Activated CD4-positive, alpha-beta memory T cell treated with anti-CD3 and anti-CD28 coated beads for 36 hours (primary cell): ENCODE measurements at regions of chr9 and their contacts with region 1.

Region 1: GRCh38 chr9:111916234-111916645 is 19.6 kb downstream of the UGCG start:
- DNase-seq: peak; percentile 53
- H3K4me3 Mint-ChIP-seq: peak overlapping the region; percentile 8
- H3K27ac Mint-ChIP-seq: peak overlapping the region; percentile 77
- H3K4me1 Mint-ChIP-seq: peaks cover 54% of the 10 kb centered on the region
- H3K27me3 Mint-ChIP-seq: no peaks in the 10 kb centered on the region

Region 2: DNA sequence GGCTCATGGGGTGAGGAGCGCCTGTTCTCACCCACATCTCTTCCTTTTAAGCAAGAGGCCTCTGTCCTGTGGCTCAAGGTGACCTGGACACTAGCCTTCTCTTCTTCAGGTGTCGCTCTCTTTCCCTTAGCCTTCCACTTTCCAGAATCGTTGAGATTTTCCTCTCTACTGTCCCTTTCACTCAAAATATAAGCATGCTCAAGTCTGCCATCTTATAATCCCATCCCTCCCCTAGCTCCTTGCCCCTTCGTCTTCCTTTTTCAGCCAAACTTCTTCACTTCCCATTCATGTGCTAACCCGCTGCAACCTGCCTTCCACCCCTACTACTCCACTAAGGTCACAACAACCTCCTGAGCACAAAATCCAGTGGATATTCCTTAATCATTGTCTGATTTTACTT is 329.9 kb before region 1 on chr9:
- CTCF ChIA-PET with region 1: no interaction called
- POLR2A ChIA-PET with region 1: no interaction called
- intact Hi-C with region 1: no loop called
- DNase-seq: no peak
- H3K4me3 Mint-ChIP-seq: no peak overlapping the region
- H3K27ac Mint-ChIP-seq: no peak overlapping the region
- H3K4me1 Mint-ChIP-seq: no peaks in the 10 kb centered on the region
- H3K27me3 Mint-ChIP-seq: no peaks in the 10 kb centered on the region

Region 3: GRCh38 chr9:111597817-111598729 is 318.2 kb before region 1 on chr9:
- CTCF ChIA-PET with region 1: no interaction called
- POLR2A ChIA-PET with region 1: no interaction called
- intact Hi-C with region 1: no loop called
- DNase-seq: peak; percentile 76
- H3K4me3 Mint-ChIP-seq: peak overlapping the region; percentile 83
- H3K27ac Mint-ChIP-seq: no peak overlapping the region
- H3K4me1 Mint-ChIP-seq: peaks cover 14% of the 10 kb centered on the region
- H3K27me3 Mint-ChIP-seq: peaks cover 28% of the 10 kb centered on the region

Region 4: GRCh38 chr9:111805830-111806241 is 110.4 kb before region 1 on chr9:
- CTCF ChIA-PET with region 1: no interaction called
- POLR2A ChIA-PET with region 1: no interaction called
- intact Hi-C with region 1: loop called (anchors 5 kb)
- DNase-seq: no peak
- H3K4me3 Mint-ChIP-seq: no peak overlapping the region
- H3K27ac Mint-ChIP-seq: no peak overlapping the region
- H3K4me1 Mint-ChIP-seq: peaks cover 30% of the 10 kb centered on the region
- H3K27me3 Mint-ChIP-seq: no peaks in the 10 kb centered on the region

Region 5: DNA sequence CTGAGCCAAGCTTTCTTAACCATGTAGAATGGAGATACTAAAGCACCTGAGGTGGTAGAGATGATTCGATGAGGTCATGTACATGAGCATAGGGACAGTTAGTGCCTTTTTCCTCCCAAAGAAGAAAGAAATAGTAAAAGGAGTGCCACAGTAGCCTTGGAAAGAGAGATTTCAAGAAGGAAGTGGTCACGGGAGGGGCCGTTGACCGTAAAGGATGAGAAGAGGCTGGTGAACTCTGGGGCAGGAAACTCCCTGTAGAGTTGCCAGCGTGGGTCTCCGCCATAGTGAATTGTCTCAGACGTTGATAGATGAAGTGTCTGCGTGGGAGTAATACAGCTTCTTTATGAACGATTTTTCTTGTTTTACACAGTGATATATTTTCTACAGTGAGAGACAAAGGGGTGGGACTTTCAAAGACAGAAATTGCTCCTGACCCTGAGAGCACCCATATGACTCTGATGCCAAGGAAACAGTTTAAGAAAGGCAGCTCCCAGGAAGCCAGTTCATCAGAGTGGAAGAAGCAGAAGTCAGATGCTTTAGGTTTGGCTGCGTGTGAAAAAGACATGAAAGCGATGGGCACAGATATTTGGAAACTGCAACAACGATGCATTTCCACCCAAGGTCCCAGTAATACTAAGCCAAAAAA is 21.7 kb after region 1 on chr9:
- CTCF ChIA-PET with region 1: interaction called, 5 read pairs
- POLR2A ChIA-PET with region 1: interaction called, 10 read pairs
- intact Hi-C with region 1: loop called (anchors 1 kb)
- DNase-seq: peak; percentile 88
- H3K4me3 Mint-ChIP-seq: peak overlapping the region; percentile 53
- H3K27ac Mint-ChIP-seq: peak overlapping the region; percentile 83
- H3K4me1 Mint-ChIP-seq: peaks cover 23% of the 10 kb centered on the region
- H3K27me3 Mint-ChIP-seq: no peaks in the 10 kb centered on the region

Region 6: GRCh38 chr9:111992523-111992922 is 76.3 kb after region 1 on chr9:
- CTCF ChIA-PET with region 1: interaction called, 3 read pairs
- POLR2A ChIA-PET with region 1: no interaction called
- intact Hi-C with region 1: loop called (anchors 1 kb)
- DNase-seq: peak; percentile 45
- H3K4me3 Mint-ChIP-seq: no peak overlapping the region
- H3K27ac Mint-ChIP-seq: peak overlapping the region; percentile 18
- H3K4me1 Mint-ChIP-seq: peaks cover 34% of the 10 kb centered on the region
- H3K27me3 Mint-ChIP-seq: peaks cover 2% of the 10 kb centered on the region

Region 7: GRCh38 chr9:112037281-112038016 is 121.2 kb after region 1 on chr9:
- CTCF ChIA-PET with region 1: interaction called, 4 read pairs
- POLR2A ChIA-PET with region 1: no interaction called
- intact Hi-C with region 1: loop called (anchors 1 kb)
- DNase-seq: peak; percentile 86
- H3K4me3 Mint-ChIP-seq: peak overlapping the region; percentile 37
- H3K27ac Mint-ChIP-seq: peak overlapping the region; percentile 81
- H3K4me1 Mint-ChIP-seq: peaks cover 49% of the 10 kb centered on the region
- H3K27me3 Mint-ChIP-seq: peaks cover 18% of the 10 kb centered on the region

Region 8: DNA sequence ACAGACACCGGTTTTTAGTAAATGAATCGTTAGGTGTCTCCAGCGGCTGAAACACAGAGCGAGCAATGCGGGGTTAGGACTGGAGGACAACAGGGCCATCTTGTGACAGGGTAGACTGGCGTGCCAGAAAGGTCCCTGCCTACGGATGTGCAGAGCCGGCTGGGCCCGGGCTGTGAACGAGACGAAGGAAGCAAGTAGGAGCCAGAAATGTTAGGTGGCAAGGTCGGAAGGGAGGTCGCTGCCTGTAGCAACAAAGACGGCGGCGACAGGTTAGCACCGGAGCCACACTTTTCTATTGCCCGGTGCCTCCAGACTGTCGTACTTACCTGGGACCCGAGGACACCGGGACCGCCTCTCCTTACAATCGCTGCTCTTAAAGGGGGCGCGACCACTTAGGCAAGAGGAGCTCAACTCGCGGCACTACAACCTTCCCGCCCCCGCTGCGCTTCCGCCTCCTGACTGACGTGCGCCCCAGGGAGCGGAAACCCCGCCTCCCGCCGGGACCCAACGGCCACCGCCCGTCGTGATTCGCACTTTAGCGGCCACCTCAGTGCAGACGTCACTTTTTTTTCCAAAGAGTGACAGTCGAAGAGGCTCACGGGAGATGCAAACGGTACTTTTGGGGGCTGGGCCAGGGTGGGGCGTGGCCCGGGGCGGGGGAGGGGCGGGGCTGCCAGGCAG is 801.6 kb after region 1 on chr9 and contains the start of gene INIP:
- CTCF ChIA-PET with region 1: interaction called, 4 read pairs
- POLR2A ChIA-PET with region 1: no interaction called
- intact Hi-C with region 1: loop called (anchors 10 kb)
- DNase-seq: peak; percentile 99
- H3K4me3 Mint-ChIP-seq: peak within 1 kb of the TSS; percentile 90
- H3K27ac Mint-ChIP-seq: peak within 1 kb of the TSS; percentile 93
- H3K4me1 Mint-ChIP-seq: peaks cover 35% of the 10 kb centered on the region
- H3K27me3 Mint-ChIP-seq: no peaks in the 10 kb centered on the region
- total RNA-seq, gene INIP: 35.1 to 37.8 TPM